AG04450 (cell line): ENCODE measurements at regions of chr2 and their contacts with region 1.

Region 1: GRCh38 chr2:237744613-237745249 is 53.8 kb upstream of the RBM44 start:
- DNase-seq: no peak
- H3K4me3 ChIP-seq: no peak overlapping the region
- H3K27ac ChIP-seq: peak overlapping the region; percentile 12
- H3K27me3 ChIP-seq: no peaks in the 10 kb centered on the region
- CTCF ChIP-seq: peak; percentile 99

Region 2: DNA sequence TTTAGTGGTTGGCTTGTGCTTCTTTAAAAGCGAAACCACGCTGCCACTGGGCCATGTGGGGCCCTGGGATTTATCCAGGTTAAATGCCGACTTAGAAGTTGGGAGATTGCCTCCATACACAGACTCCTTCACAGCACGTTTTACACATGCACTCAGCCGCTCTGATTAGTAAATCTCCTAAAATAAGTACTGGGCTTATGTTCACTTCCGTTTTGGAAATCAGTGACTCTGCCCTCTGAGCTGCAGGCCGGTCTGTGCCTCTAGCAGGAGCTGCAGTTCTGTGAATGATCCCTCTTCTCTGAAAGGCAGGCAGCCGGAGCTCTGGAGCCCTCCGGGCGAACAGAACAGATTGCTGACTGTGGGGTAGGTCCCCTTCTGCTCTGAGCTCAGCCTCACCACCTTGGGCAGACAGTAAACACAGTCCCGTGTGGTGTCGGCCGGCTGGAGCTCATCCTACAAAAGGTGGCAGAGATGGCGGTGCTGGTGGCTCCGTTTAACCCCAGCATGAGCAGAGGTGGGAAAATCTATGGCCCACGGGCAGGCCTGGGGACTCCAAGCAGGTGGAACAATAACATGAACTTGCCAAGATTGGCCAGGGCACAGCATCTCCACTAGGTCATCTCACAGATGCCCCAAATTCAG is 144.4 kb before region 1 on chr2:
- CTCF ChIA-PET with region 1: interaction called, 10 read pairs
- POLR2A ChIA-PET with region 1: no interaction called
- DNase-seq: no peak
- H3K4me3 ChIP-seq: no peak overlapping the region
- H3K27ac ChIP-seq: peak overlapping the region; percentile 21
- H3K27me3 ChIP-seq: no peaks in the 10 kb centered on the region
- CTCF ChIP-seq: peak; percentile 39; the same call in 1 of the 2 replicates

Region 3: GRCh38 chr2:237674731-237675276 is 69.9 kb before region 1 on chr2:
- CTCF ChIA-PET with region 1: interaction called, 101 read pairs
- POLR2A ChIA-PET with region 1: no interaction called
- DNase-seq: no peak
- H3K4me3 ChIP-seq: no peak overlapping the region
- H3K27ac ChIP-seq: peak overlapping the region; percentile 61
- H3K27me3 ChIP-seq: no peaks in the 10 kb centered on the region
- CTCF ChIP-seq: no peak

Region 4: GRCh38 chr2:237691908-237692600 is 52.7 kb before region 1 on chr2:
- CTCF ChIA-PET with region 1: interaction called, 24 read pairs
- POLR2A ChIA-PET with region 1: no interaction called
- DNase-seq: peak; percentile 70
- H3K4me3 ChIP-seq: peak overlapping the region; percentile 88
- H3K27ac ChIP-seq: peak overlapping the region; percentile 65
- H3K27me3 ChIP-seq: no peaks in the 10 kb centered on the region
- CTCF ChIP-seq: no peak

Region 5: GRCh38 chr2:237731663-237732062 is 13.1 kb before region 1 on chr2:
- CTCF ChIA-PET with region 1: interaction called, 70 read pairs
- POLR2A ChIA-PET with region 1: no interaction called
- DNase-seq: no peak
- H3K4me3 ChIP-seq: no peak overlapping the region
- H3K27ac ChIP-seq: no peak overlapping the region
- H3K27me3 ChIP-seq: no peaks in the 10 kb centered on the region
- CTCF ChIP-seq: no peak